Activated CD4-positive, alpha-beta T cell treated with anti-CD3 and anti-CD28 coated beads, Interleukin-2, amount 10 ng/mL, durations not matched to agents 24 days and 14 days (primary cell): ENCODE measurements at regions of chr7 and their contacts with region 1.

Region 1: GRCh38 chr7:90244909-90245851 is at the start of gene CFAP69:
- DNase-seq: peak; percentile 96
- H3K4me3 Mint-ChIP-seq: peak within 1 kb of the TSS; percentile 85
- H3K27ac Mint-ChIP-seq: peak within 1 kb of the TSS; percentile 20
- H3K4me1 Mint-ChIP-seq: peaks cover 10% of the 10 kb centered on the region
- H3K27me3 Mint-ChIP-seq: peaks cover 47% of the 10 kb centered on the region
- total RNA-seq, gene CFAP69: not detected in 2 replicates

Region 2: GRCh38 chr7:90155206-90155605 is 90.0 kb before region 1 on chr7:
- intact Hi-C with region 1: loop called (anchors 5 kb)
- DNase-seq: no peak
- H3K4me3 Mint-ChIP-seq: peak overlapping the region; percentile 67
- H3K27ac Mint-ChIP-seq: no peak overlapping the region
- H3K4me1 Mint-ChIP-seq: peaks cover 4% of the 10 kb centered on the region
- H3K27me3 Mint-ChIP-seq: peaks cover 22% of the 10 kb centered on the region

Region 3: GRCh38 chr7:90178679-90179278 is 66.4 kb before region 1 on chr7:
- intact Hi-C with region 1: loop called (anchors 2 kb)
- DNase-seq: peak; percentile 61
- H3K4me3 Mint-ChIP-seq: peak overlapping the region; percentile 70
- H3K27ac Mint-ChIP-seq: peak overlapping the region; percentile 94
- H3K4me1 Mint-ChIP-seq: peaks cover 18% of the 10 kb centered on the region
- H3K27me3 Mint-ChIP-seq: no peaks in the 10 kb centered on the region

Region 4: DNA sequence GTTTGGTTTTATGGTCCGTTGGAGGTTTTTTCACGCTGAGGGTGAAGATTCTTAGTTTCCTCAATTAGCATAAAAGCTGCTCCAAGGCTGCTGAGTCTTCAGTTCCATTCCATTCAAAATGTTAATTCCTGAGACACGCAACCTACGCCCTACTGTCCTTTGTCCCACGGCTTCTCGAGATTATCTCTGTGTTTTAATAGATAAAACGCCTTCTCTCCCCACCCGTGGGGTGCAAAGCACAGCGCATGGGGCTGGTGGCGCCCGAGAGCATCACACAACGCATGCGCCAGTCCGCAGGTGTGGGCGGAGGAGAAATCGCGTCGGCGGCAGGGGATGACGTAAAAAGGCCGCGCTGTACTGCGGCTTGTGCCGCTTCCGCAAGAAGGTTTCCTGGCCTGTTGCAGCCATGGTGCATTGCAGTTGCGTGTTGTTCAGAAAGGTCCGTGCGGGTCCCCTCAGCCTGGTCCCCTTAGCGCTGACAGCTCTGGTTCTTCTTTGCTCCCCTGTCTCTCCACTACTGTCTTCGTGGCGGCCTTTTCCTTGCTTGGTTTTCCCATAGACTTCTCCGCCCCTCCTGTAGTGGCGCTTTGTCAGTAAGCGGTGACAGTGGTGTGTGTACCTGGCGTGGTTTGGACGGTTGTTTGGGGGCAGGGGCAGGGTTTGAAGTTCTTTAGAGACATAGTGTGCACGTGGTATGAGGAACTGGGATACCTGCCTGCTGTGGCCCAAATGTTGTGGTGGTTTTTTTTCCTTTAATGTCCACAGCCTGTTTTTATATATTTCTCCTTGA is 101.4 kb after region 1 on chr7 and contains the start of gene GTPBP10:
- intact Hi-C with region 1: loop called (anchors 1 kb)
- DNase-seq: peak; percentile 98
- H3K4me3 Mint-ChIP-seq: peak within 1 kb of the TSS; percentile 97
- H3K27ac Mint-ChIP-seq: peak within 1 kb of the TSS; percentile 99
- H3K4me1 Mint-ChIP-seq: peaks cover 31% of the 10 kb centered on the region
- H3K27me3 Mint-ChIP-seq: peaks cover 2% of the 10 kb centered on the region
- total RNA-seq, gene GTPBP10: 37.1 and 37.7 TPM in 2 replicates

Region 5: DNA sequence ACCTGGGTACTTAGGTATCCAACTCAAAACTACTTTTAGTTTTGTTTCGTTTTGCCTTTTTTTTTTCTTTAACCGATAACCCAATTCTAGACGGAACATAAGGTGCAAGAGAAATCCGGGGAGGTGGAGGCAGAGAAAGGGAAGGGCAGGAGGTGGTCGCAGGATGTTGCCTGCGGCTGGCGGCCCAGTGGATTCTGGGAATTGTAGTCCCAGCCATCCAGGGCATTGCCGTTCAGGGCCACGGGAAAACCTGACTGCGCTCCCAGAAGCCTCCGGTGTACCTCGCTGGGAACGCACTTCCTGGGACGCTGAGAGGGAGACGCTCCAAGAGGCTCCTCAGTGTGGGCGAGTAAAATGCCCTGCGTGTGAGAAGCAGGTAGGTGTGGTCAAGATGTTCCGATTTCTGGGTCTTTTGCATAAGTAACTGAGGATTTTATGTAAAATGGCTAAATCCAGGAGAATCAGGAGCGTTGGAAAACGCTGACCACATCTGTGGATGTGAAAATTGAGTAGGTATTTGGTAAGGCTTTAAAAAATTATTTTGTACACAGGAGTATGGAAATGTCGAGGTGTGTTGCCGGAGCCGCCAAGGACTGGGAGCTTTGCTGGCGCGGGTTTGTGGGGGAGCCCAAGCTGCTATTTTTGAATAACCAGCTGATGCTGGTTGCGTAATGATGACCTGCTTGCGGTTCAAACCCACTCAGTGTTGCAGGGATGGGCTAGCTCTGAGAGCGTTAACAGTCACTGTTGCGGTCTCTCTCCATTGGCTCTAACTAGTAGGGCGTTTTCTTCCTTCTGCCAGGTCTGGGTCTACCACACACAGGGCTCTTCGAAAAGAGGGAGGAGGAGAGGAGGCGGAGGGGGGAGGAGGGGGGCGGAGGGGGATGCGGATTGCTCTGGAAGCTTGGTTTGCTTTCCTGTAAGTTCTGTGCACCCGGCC is 158.3 kb after region 1 on chr7 and contains the start of gene CLDN12:
- intact Hi-C with region 1: loop called (anchors 1 kb)
- DNase-seq: peak; percentile 90
- H3K4me3 Mint-ChIP-seq: peak within 1 kb of the TSS; percentile 93
- H3K27ac Mint-ChIP-seq: peak within 1 kb of the TSS; percentile 89
- H3K4me1 Mint-ChIP-seq: peaks cover 19% of the 10 kb centered on the region
- H3K27me3 Mint-ChIP-seq: peaks cover 16% of the 10 kb centered on the region
- total RNA-seq, gene CLDN12: 3.3 and 4.2 TPM in 2 replicates

Region 6: GRCh38 chr7:90512821-90513254 is 267.7 kb after region 1 on chr7:
- intact Hi-C with region 1: no loop called
- DNase-seq: peak; percentile 11
- H3K4me3 Mint-ChIP-seq: no peak overlapping the region
- H3K27ac Mint-ChIP-seq: no peak overlapping the region
- H3K4me1 Mint-ChIP-seq: no peaks in the 10 kb centered on the region
- H3K27me3 Mint-ChIP-seq: peaks cover 3% of the 10 kb centered on the region

Region 7: DNA sequence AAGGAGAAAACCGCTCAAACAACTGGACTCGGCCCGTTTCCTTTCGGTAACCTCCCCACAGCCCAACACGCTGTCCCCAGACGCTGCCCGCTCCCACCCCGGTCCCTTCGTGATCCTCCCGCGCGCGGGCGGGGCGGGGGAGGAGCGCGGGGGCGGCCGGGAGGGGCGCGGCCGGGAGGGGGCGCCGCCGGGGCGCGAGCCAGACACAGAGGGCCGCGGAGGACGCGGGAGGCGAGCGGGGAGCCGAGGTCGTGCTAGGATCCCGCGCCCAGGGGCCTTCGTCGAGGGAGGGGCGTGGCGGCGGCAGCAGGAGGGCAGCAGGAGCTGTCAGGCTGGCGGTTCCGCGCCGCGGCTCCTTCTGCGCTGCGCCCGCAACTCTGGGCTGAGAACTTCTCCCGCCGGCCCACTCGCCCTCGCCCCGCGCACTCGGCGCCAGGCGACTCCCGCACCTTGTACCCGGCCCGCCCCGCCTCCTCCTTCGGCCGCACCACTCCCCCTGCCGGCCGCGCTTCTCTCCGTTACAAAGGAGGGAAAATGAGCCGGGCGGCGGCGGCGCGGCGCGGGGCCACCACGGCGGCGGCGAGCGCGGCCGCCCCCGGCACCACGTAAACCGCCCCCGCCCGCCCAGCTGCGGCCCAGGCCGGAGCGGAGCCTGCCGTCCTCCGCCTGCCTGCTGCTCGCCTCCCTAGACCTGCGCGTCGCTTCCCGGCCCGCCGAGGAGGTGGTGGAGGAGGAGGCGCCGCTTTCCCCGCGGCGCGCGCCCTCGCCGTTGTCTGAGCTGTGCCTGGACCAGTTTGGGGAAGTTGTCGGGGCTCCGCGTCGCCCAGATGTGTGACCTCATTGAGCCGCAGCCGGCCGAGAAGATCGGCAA is 350.9 kb after region 1 on chr7 and contains the start of gene CDK14:
- intact Hi-C with region 1: loop called (anchors 10 kb)
- DNase-seq: peak; percentile 85
- H3K4me3 Mint-ChIP-seq: peak within 1 kb of the TSS; percentile 88
- H3K27ac Mint-ChIP-seq: peak within 1 kb of the TSS; percentile 80
- H3K4me1 Mint-ChIP-seq: peaks cover 14% of the 10 kb centered on the region
- H3K27me3 Mint-ChIP-seq: peaks cover 57% of the 10 kb centered on the region
- total RNA-seq, gene CDK14: 1.9 and 2.0 TPM in 2 replicates